ENCODE measurements at regions of chr15 and their contacts with region 1.

Region 1: GRCh38 chr15:29398907-29399306 is 129.3 kb upstream of the NSMCE3 start:
- DNase-seq: no peak
- H3K4me3 ChIP-seq: no peak overlapping the region
- H3K27ac ChIP-seq: no peak overlapping the region
- H3K4me1 ChIP-seq: peaks cover 0 to 53% (median 30%) of the 10 kb centered on the region in 4 donors
- H3K27me3 ChIP-seq: no peaks in the 10 kb centered on the region
- CTCF ChIP-seq: no peak
- EP300 ChIP-seq: no peak
- POLR2A ChIP-seq: no peak

Region 2: GRCh38 chr15:29269485-29270168 is 129.3 kb before region 1 on chr15 and contains the start of gene NSMCE3:
- intact Hi-C with region 1: loop called (anchors 1 kb)
- DNase-seq: peak; percentile 96
- H3K4me3 ChIP-seq: peak within 1 kb of the TSS; percentile 71 to 92 (median 76)
- H3K27ac ChIP-seq: peak within 1 kb of the TSS; percentile 88 to 94 (median 92)
- H3K4me1 ChIP-seq: peaks cover 0 to 34% (median 22%) of the 10 kb centered on the region in 4 donors
- H3K27me3 ChIP-seq: no peaks in the 10 kb centered on the region
- CTCF ChIP-seq: no peak
- EP300 ChIP-seq: peak in 1 of 4 donors; percentile 55
- POLR2A ChIP-seq: peak; percentile 90 to 93
- total RNA-seq, gene NSMCE3: 7.8 to 12.8 (median 10.3) TPM

Region 3: DNA sequence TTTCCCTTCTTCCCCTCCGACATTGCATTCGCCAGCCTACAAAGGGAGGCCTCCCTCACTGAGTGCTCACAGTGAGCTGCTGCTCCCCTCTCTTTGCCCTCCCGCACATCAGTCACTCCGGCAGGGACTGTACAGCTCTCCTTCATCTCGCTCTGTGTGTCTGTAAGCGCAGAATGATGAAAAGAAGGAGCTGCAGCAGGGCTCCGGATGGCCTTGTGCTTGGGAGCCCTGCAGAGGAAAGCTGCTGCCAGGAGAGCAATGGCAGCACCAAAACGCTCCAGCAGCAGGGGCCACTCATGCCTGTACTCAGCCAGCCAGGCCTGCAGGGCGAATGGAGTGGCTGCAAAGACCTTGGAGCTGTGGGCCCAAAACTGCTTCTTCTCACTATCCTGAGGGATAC is 22.3 kb before region 1 on chr15:
- intact Hi-C with region 1: no loop called
- DNase-seq: no peak
- H3K4me3 ChIP-seq: no peak overlapping the region
- H3K27ac ChIP-seq: no peak overlapping the region
- H3K4me1 ChIP-seq: no peaks in the 10 kb centered on the region
- H3K27me3 ChIP-seq: no peaks in the 10 kb centered on the region
- CTCF ChIP-seq: no peak
- EP300 ChIP-seq: no peak
- POLR2A ChIP-seq: no peak

Region 4: GRCh38 chr15:29550834-29551465 is 152.0 kb after region 1 on chr15:
- intact Hi-C with region 1: no loop called
- DNase-seq: no peak
- H3K4me3 ChIP-seq: no peak overlapping the region
- H3K27ac ChIP-seq: no peak overlapping the region
- H3K4me1 ChIP-seq: no peaks in the 10 kb centered on the region
- H3K27me3 ChIP-seq: no peaks in the 10 kb centered on the region
- CTCF ChIP-seq: no peak
- EP300 ChIP-seq: no peak
- POLR2A ChIP-seq: no peak